ENCODE measurements at regions of chr2 and their contacts with region 1.

Region 1: GRCh38 chr2:182077451-182078142 is 91.9 kb downstream of the PPP1R1C start:
- DNase-seq: peak in 1 of 2 donors; percentile 68
- ATAC-seq: peak; percentile 76 to 96 (median 90)
- H3K4me3 ChIP-seq: no peak overlapping the region
- H3K27ac ChIP-seq: peak overlapping the region in 1 of 10 donors; percentile 14
- H3K4me1 ChIP-seq: peaks cover 0 to 11% (median 5%) of the 10 kb centered on the region in 9 donors
- H3K27me3 ChIP-seq: no peaks in the 10 kb centered on the region
- CTCF ChIP-seq: peak; percentile 47 to 80 (median 66)

Region 2: DNA sequence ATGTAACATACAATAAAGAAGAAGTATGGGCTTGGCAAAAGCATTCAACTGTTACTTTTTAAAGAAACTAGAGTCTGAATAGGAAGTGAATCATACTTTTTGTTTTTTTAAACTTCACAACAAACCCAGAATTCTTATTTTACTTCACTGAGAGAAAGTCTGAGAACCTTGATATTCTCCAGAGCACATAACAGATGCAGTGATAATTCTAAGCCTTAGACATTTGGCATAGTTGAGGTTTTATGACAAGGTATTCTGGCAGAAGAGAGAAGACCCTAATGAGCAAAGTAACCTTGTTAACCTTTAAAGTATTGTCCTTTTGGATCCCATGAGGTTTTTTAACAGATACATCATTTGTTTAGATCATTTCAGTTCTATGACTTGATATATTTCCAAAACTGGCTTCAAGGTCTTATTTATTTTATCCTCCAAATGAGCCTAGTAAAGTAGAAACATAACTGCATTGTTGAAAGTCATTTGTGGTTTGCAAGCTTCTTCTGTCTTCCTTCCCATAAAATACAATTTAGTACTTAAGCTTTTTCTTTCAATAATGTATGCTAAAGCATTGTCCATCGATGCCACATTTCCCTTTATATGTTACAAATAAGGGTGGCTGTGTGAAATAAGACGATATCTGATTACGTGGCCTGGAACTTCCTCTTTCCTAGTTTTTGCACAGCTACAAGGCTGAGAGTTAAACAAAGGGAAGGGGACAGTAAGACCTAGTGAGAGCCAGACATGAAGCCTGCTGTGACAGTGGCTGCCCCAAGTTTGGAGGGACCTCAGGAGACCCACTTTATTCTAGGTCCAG is 272.2 kb before region 1 on chr2:
- intact Hi-C with region 1: no loop called
- DNase-seq: no peak
- ATAC-seq: peak in 5 of 8 donors; percentile 22 to 77 (median 42)
- H3K4me3 ChIP-seq: no peak overlapping the region
- H3K27ac ChIP-seq: peak overlapping the region in 6 of 10 donors; percentile 16 to 74 (median 44)
- H3K4me1 ChIP-seq: peaks cover 0 to 32% (median 6%) of the 10 kb centered on the region in 9 donors
- H3K27me3 ChIP-seq: no peaks in the 10 kb centered on the region
- CTCF ChIP-seq: no peak

Region 3: DNA sequence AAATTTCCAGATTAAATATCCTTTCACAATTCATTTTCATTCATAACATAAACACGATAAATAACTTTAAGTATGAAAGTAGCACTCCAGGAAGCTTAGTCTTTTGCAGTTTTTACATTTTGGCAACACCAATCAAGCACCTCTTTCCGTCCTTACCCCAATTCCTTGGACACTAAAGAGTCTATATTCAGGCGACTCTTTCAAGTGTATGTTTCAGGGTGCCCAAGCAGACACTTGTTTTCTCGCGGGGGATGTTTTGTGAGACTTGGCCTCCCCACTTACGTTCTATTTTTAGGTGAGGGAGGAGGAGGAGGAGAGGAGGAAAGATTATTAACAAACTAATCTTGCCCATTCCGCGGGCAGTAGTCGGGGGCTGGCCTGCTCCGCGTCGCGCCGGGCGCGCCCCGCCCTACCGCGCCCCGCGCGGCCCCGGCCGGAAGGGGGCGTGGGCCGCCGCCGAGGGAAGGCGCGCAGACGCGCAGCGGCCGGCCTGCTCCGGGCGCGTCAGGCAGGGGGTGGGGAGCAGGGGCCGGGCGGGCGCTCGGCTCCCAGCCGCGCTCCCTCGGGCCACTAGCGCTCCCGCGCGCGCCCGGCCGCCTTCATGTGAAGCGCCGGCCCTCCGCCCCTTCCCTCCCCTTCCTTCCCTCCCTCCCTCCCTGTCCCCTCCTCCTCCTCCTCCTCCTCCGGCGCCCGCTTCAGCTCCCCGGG is 186.2 kb before region 1 on chr2 and contains the start of gene ITPRID2:
- intact Hi-C with region 1: loop called in 3 of 10 experiments (anchors 10 kb)
- DNase-seq: peak; percentile 89 to 90
- ATAC-seq: peak; percentile 93 to 98 (median 96)
- H3K4me3 ChIP-seq: peak within 1 kb of the TSS; percentile 51 to 92 (median 88)
- H3K27ac ChIP-seq: peak within 1 kb of the TSS; percentile 80 to 99 (median 98)
- H3K4me1 ChIP-seq: peaks cover 0 to 53% (median 44%) of the 10 kb centered on the region in 9 donors
- H3K27me3 ChIP-seq: no peaks in the 10 kb centered on the region
- CTCF ChIP-seq: peak in 4 of 9 donors; percentile 7 to 40 (median 38)
- total RNA-seq, gene ITPRID2: 49.5 to 86.6 (median 67.9) TPM

Region 4: GRCh38 chr2:181904022-181904632 is 173.5 kb before region 1 on chr2:
- intact Hi-C with region 1: loop called in 6 of 10 experiments (anchors 10 kb)
- DNase-seq: peak in 1 of 2 donors; percentile 9
- ATAC-seq: peak in 1 of 8 donors; percentile 58
- H3K4me3 ChIP-seq: no peak overlapping the region
- H3K27ac ChIP-seq: peak overlapping the region in 1 of 10 donors; percentile 36
- H3K4me1 ChIP-seq: peaks cover 0 to 83% (median 54%) of the 10 kb centered on the region in 9 donors
- H3K27me3 ChIP-seq: no peaks in the 10 kb centered on the region
- CTCF ChIP-seq: peak; percentile 37 to 78 (median 66)

Region 5: DNA sequence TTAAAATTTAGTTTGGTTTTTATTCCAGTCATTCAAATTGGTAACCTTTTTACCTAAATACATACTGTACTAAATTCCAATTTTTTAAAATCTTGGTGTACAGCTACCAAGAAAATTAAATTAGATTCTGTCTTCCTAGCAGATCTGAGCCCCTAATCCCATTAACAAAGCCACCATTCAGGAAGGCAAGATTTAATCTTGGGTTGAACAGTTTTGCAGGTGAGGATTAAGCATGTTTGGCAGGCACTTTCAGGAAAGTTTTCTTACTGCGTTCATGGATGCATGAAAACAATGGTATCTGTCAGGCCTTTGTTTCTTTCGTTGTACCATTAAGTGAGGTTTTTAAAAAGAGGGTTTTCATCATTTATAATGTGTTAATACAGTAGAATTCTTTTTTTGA is 153.3 kb before region 1 on chr2:
- intact Hi-C with region 1: loop called in 1 of 10 experiments (anchors 10 kb)
- DNase-seq: no peak
- ATAC-seq: no peak
- H3K4me3 ChIP-seq: no peak overlapping the region
- H3K27ac ChIP-seq: no peak overlapping the region
- H3K4me1 ChIP-seq: peaks cover 0 to 46% (median 9%) of the 10 kb centered on the region in 9 donors
- H3K27me3 ChIP-seq: no peaks in the 10 kb centered on the region
- CTCF ChIP-seq: no peak

Region 6: GRCh38 chr2:181970160-181970794 is 107.3 kb before region 1 on chr2:
- intact Hi-C with region 1: loop called in 3 of 10 experiments (anchors 5 to 10 kb)
- DNase-seq: no peak
- ATAC-seq: no peak
- H3K4me3 ChIP-seq: no peak overlapping the region
- H3K27ac ChIP-seq: no peak overlapping the region
- H3K4me1 ChIP-seq: no peaks in the 10 kb centered on the region
- H3K27me3 ChIP-seq: no peaks in the 10 kb centered on the region
- CTCF ChIP-seq: peak in 4 of 9 donors; percentile 22 to 33 (median 28)

Region 7: DNA sequence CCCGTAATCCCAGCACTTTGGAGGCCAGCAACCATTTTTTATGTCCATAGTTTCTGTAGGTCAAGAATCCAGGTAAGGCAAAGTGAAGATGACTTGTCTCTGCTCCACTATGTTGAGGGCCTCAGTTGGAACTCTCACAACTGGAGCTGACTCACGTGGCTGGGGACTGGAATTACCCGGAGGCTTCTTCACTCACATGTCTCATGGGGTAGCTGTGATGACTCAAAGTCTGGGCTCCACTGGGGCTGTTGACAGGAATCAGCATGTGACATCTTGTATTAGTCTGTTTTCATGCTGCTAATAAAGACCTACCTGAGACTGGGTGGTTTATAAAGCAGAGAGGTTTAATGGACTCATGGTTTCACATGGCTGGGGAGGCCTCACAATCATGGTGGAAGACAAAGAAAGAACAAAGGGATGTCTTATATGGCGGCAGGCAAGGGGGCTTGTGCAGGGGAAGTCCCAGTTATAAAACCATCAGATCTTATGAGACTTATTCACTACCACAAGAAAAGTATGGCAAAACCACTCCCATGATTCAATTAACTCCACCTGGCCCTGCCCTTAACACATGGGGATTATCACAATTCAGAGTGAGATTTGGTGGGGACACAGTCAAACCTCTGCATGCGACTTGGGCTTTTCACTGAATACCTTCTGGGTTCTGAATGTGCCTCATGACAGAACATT is 99.8 kb before region 1 on chr2:
- intact Hi-C with region 1: loop called in 4 of 10 experiments (anchors 5 to 10 kb)
- DNase-seq: no peak
- ATAC-seq: no peak
- H3K4me3 ChIP-seq: no peak overlapping the region
- H3K27ac ChIP-seq: no peak overlapping the region
- H3K4me1 ChIP-seq: no peaks in the 10 kb centered on the region
- H3K27me3 ChIP-seq: no peaks in the 10 kb centered on the region
- CTCF ChIP-seq: no peak

Region 8: GRCh38 chr2:181984814-181985631 is 92.6 kb before region 1 on chr2:
- intact Hi-C with region 1: loop called in 3 of 10 experiments (anchors 5 to 10 kb)
- DNase-seq: no peak
- ATAC-seq: peak; percentile 55 to 78 (median 70)
- H3K4me3 ChIP-seq: peak overlapping the region in 6 of 10 donors; percentile 19 to 47 (median 44)
- H3K27ac ChIP-seq: peak overlapping the region; percentile 11 to 87 (median 76)
- H3K4me1 ChIP-seq: peaks cover 0 to 32% (median 16%) of the 10 kb centered on the region in 9 donors
- H3K27me3 ChIP-seq: no peaks in the 10 kb centered on the region
- CTCF ChIP-seq: no peak

Region 9: DNA sequence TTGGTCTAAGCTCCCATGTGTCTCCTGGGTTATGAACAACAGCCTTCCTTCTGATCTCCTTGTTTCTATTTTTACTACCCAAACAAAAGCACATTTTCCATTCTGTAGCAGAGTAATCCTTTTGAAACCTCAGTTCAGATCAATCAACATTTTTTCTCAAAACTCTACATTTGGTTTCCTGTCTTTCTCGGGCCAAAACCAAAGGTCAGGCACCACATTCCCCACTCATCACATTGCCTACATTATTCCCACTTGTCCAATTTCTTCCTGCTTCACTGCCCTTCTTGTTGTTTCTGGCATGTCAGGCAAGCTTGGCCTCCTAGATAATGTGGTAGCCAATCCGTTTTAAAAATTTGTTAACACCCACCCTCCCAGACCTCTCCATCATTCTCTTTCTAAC is 104.8 kb after region 1 on chr2:
- intact Hi-C with region 1: no loop called
- DNase-seq: no peak
- ATAC-seq: no peak
- H3K4me3 ChIP-seq: no peak overlapping the region
- H3K27ac ChIP-seq: no peak overlapping the region
- H3K4me1 ChIP-seq: peaks cover 0 to 10% (median 4%) of the 10 kb centered on the region in 9 donors
- H3K27me3 ChIP-seq: no peaks in the 10 kb centered on the region
- CTCF ChIP-seq: no peak

Region 10: DNA sequence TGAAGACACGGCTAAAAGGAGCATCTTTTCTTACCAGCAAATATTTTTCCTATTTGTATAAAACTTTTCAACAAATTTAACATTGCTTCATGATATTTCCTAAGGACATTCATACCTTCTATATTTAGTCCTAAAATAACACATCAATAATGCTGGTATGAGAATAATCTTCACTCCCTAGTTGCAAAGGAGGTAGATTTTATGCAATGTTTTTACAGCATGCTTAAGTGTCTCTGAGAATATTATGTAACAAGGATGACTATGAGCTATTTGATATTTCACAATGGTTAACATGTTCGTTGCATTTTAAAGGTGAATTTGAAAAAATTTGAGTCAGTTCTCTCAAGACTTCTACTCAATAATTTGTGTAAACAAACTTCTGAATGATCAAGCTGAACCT is 1553.4 kb after region 1 on chr2:
- intact Hi-C with region 1: no loop called
- DNase-seq: no peak
- ATAC-seq: no peak
- H3K4me3 ChIP-seq: no peak overlapping the region
- H3K27ac ChIP-seq: no peak overlapping the region
- H3K4me1 ChIP-seq: no peaks in the 10 kb centered on the region
- H3K27me3 ChIP-seq: no peaks in the 10 kb centered on the region
- CTCF ChIP-seq: no peak

Measured in heart right ventricle (tissue), 16 donors.